Activated CD4-positive, alpha-beta T cell treated with anti-CD3 and anti-CD28 coated beads, Interleukin-2, amount 10 ng/mL, durations not matched to agents 24 days and 14 days (primary cell): ENCODE measurements at regions of chr10 and their contacts with region 1.

Region 1: GRCh38 chr10:96586419-96587263 is at the start of gene TM9SF3:
- DNase-seq: peak; percentile 97
- H3K4me3 Mint-ChIP-seq: peak within 1 kb of the TSS; percentile 93
- H3K27ac Mint-ChIP-seq: peak within 1 kb of the TSS; percentile 91
- H3K4me1 Mint-ChIP-seq: peaks cover 25% of the 10 kb centered on the region
- H3K27me3 Mint-ChIP-seq: peaks cover 13% of the 10 kb centered on the region
- total RNA-seq, gene TM9SF3: 84.5 and 86.1 TPM in 2 replicates

Region 2: GRCh38 chr10:96565774-96566173 is 20.9 kb before region 1 on chr10:
- intact Hi-C with region 1: loop called (anchors 2 kb)
- DNase-seq: no peak
- H3K4me3 Mint-ChIP-seq: no peak overlapping the region
- H3K27ac Mint-ChIP-seq: no peak overlapping the region
- H3K4me1 Mint-ChIP-seq: peaks cover 31% of the 10 kb centered on the region
- H3K27me3 Mint-ChIP-seq: no peaks in the 10 kb centered on the region

Region 3: GRCh38 chr10:96719850-96720421 is 133.3 kb after region 1 on chr10:
- intact Hi-C with region 1: loop called (anchors 10 kb)
- DNase-seq: peak; percentile 78
- H3K4me3 Mint-ChIP-seq: peak overlapping the region; percentile 99
- H3K27ac Mint-ChIP-seq: peak overlapping the region; percentile 92
- H3K4me1 Mint-ChIP-seq: peaks cover 22% of the 10 kb centered on the region
- H3K27me3 Mint-ChIP-seq: peaks cover 21% of the 10 kb centered on the region

Region 4: GRCh38 chr10:96991313-96991841 is 404.7 kb after region 1 on chr10:
- intact Hi-C with region 1: no loop called
- DNase-seq: no peak
- H3K4me3 Mint-ChIP-seq: no peak overlapping the region
- H3K27ac Mint-ChIP-seq: no peak overlapping the region
- H3K4me1 Mint-ChIP-seq: peaks cover 2% of the 10 kb centered on the region
- H3K27me3 Mint-ChIP-seq: no peaks in the 10 kb centered on the region

Region 5: GRCh38 chr10:97179731-97180362 is 593.2 kb after region 1 on chr10:
- intact Hi-C with region 1: no loop called
- DNase-seq: no peak
- H3K4me3 Mint-ChIP-seq: no peak overlapping the region
- H3K27ac Mint-ChIP-seq: no peak overlapping the region
- H3K4me1 Mint-ChIP-seq: no peaks in the 10 kb centered on the region
- H3K27me3 Mint-ChIP-seq: peaks cover 45% of the 10 kb centered on the region

Region 6: GRCh38 chr10:97292097-97292862 is 705.6 kb after region 1 on chr10 and contains the start of gene ARHGAP19:
- intact Hi-C with region 1: loop called (anchors 5 kb)
- DNase-seq: peak; percentile 98
- H3K4me3 Mint-ChIP-seq: peak within 1 kb of the TSS; percentile 88
- H3K27ac Mint-ChIP-seq: peak within 1 kb of the TSS; percentile 87
- H3K4me1 Mint-ChIP-seq: peaks cover 23% of the 10 kb centered on the region
- H3K27me3 Mint-ChIP-seq: no peaks in the 10 kb centered on the region
- total RNA-seq, gene ARHGAP19: 26.4 and 30.7 TPM in 2 replicates